Natural killer cell (primary cell): ENCODE measurements at regions of chr19 and their contacts with region 1.

Region 1: GRCh38 chr19:54189735-54190502 is 539 bp upstream of the MBOAT7 start:
- DNase-seq: peak; percentile 100
- ATAC-seq: peak; percentile 57 to 76 (median 61)
- H3K4me3 ChIP-seq: peak overlapping the region; percentile 92
- H3K4me3 Mint-ChIP-seq: peak overlapping the region; percentile 99
- H3K27ac ChIP-seq: peak overlapping the region; percentile 98
- H3K27ac Mint-ChIP-seq: peak overlapping the region; percentile 97 to 99
- H3K4me1 ChIP-seq: peaks cover 23% of the 10 kb centered on the region
- H3K4me1 Mint-ChIP-seq: peaks cover 26 to 36% of the 10 kb centered on the region in 2 donors
- H3K27me3 ChIP-seq: no peaks in the 10 kb centered on the region
- H3K27me3 Mint-ChIP-seq: no peaks in the 10 kb centered on the region
- CTCF ChIP-seq: no peak

Region 2: GRCh38 chr19:53867225-53868090 is 322.5 kb before region 1 on chr19 and contains the start of gene MYADM:
- intact Hi-C with region 1: loop called (anchors 2 kb)
- DNase-seq: peak; percentile 100
- ATAC-seq: peak; percentile 66 to 88 (median 66)
- H3K4me3 ChIP-seq: peak within 1 kb of the TSS; percentile 95
- H3K4me3 Mint-ChIP-seq: peak within 1 kb of the TSS; percentile 96
- H3K27ac ChIP-seq: peak within 1 kb of the TSS; percentile 99
- H3K27ac Mint-ChIP-seq: peak within 1 kb of the TSS; percentile 98 to 99
- H3K4me1 ChIP-seq: peaks cover 60% of the 10 kb centered on the region
- H3K4me1 Mint-ChIP-seq: peaks cover 38 to 53% of the 10 kb centered on the region in 2 donors
- H3K27me3 ChIP-seq: no peaks in the 10 kb centered on the region
- H3K27me3 Mint-ChIP-seq: no peaks in the 10 kb centered on the region
- CTCF ChIP-seq: no peak
- total RNA-seq, gene MYADM: 219 to 658 (median 296) TPM

Region 3: GRCh38 chr19:53912653-53913052 is 277.3 kb before region 1 on chr19:
- intact Hi-C with region 1: no loop called
- DNase-seq: no peak
- ATAC-seq: no peak
- H3K4me3 ChIP-seq: no peak overlapping the region
- H3K4me3 Mint-ChIP-seq: no peak overlapping the region
- H3K27ac ChIP-seq: no peak overlapping the region
- H3K27ac Mint-ChIP-seq: no peak overlapping the region
- H3K4me1 ChIP-seq: peaks cover 15% of the 10 kb centered on the region
- H3K4me1 Mint-ChIP-seq: peaks cover 8 to 18% of the 10 kb centered on the region in 2 donors
- H3K27me3 ChIP-seq: peaks cover 19% of the 10 kb centered on the region
- H3K27me3 Mint-ChIP-seq: peaks cover 45 to 63% of the 10 kb centered on the region in 2 donors
- CTCF ChIP-seq: no peak

Region 4: DNA sequence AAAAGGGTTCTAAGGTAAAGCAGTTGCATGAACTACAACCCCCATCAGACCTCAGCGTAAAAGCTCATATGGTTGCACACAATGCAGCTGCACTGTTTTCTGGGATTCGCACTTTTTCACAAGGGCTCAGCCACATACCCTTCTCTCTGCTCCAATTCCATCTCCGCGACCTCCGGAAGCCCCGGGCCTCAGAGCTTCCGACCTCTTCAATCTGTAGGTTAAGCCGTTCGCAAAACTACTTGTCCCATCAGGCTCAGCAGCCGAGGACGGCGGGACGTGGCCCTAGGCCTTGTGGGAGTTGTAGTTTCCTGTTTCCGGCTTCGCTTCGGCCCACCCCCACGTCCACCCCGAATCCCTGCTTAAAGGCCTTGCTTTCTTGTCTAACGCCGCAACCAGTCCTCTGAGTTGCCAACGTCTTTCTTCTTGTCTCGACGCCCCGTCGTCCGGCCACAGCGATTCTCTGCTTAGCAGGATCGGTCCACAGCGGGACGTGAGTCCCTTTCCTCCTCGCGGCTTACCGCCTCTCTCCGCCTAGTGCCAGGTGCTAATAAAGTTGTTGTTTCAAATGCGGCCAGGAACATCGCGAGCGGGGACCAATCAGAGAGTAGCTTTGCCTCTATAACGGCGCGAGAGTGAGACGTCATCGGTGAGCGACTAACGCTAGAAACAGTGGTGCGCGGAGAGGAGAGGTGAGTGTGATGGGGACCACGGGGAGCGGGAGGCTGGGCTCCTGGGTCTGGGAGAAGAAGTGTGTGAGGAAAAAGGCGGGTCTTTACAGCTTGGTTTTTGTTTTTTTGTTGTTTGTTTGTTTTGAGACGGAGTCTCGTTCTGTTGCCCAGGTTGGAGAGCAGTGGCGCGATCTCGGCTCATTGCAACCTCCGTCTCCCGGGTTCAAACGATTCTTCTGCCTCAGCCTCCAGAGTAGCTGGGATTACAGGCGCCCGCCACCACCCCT is 74.5 kb before region 1 on chr19 and contains the starts of genes PRPF31 and TFPT:
- intact Hi-C with region 1: loop called (anchors 1 kb)
- DNase-seq: peak; percentile 94 to 99
- ATAC-seq: peak; percentile 91 to 95 (median 93)
- H3K4me3 ChIP-seq: peak within 1 kb of the TSS; percentile 56
- H3K4me3 Mint-ChIP-seq: peak within 1 kb of the TSS; percentile 92
- H3K27ac ChIP-seq: peak within 1 kb of the TSS; percentile 67
- H3K27ac Mint-ChIP-seq: peak within 1 kb of the TSS; percentile 87 to 88
- H3K4me1 ChIP-seq: peaks cover 24% of the 10 kb centered on the region
- H3K4me1 Mint-ChIP-seq: peaks cover 27 to 44% of the 10 kb centered on the region in 2 donors
- H3K27me3 ChIP-seq: no peaks in the 10 kb centered on the region
- H3K27me3 Mint-ChIP-seq: no peaks in the 10 kb centered on the region
- CTCF ChIP-seq: no peak
- total RNA-seq, gene PRPF31: 64.4 to 65.9 (median 64.9) TPM
- total RNA-seq, gene TFPT: 14.1 to 14.4 (median 14.2) TPM

Region 5: GRCh38 chr19:54137086-54137921 is 52.6 kb before region 1 on chr19 and contains the start of gene CNOT3:
- intact Hi-C with region 1: loop called (anchors 1 kb)
- DNase-seq: peak; percentile 98 to 100
- ATAC-seq: peak; percentile 76 to 90 (median 79)
- H3K4me3 ChIP-seq: peak within 1 kb of the TSS; percentile 76
- H3K4me3 Mint-ChIP-seq: peak within 1 kb of the TSS; percentile 95
- H3K27ac ChIP-seq: peak within 1 kb of the TSS; percentile 94
- H3K27ac Mint-ChIP-seq: peak within 1 kb of the TSS; percentile 80 to 90
- H3K4me1 ChIP-seq: peaks cover 41% of the 10 kb centered on the region
- H3K4me1 Mint-ChIP-seq: peaks cover 50 to 58% of the 10 kb centered on the region in 2 donors
- H3K27me3 ChIP-seq: no peaks in the 10 kb centered on the region
- H3K27me3 Mint-ChIP-seq: no peaks in the 10 kb centered on the region
- CTCF ChIP-seq: no peak
- total RNA-seq, gene CNOT3: 46.3 to 73.9 (median 51.7) TPM

Region 6: DNA sequence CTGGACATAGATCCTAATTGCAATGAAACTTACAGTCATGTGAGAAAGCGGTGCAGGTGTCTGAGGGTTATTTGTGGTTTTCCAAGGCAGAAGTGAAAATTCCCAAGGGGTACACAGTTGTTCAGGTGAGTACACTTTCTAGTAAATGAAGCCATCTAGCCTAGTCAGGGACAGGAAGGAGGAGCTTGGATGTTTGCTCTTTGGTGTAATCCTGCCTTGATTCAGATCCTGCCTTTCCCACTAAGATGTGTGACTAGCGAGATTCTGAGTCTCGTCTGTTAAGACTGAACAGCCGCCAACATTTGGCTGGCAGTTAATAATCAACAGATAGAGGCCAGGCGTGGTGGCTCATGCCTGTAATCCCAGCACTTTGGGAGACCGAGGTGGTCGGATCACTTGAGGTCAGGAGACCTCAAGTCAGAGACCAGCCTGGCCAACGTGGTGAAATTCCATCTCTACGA is 13.3 kb after region 1 on chr19:
- intact Hi-C with region 1: loop called (anchors 1 kb)
- DNase-seq: no peak
- ATAC-seq: no peak
- H3K4me3 ChIP-seq: no peak overlapping the region
- H3K4me3 Mint-ChIP-seq: peak overlapping the region; percentile 42
- H3K27ac ChIP-seq: no peak overlapping the region
- H3K27ac Mint-ChIP-seq: peak overlapping the region in 1 of 2 donors; percentile 100
- H3K4me1 ChIP-seq: peaks cover 62% of the 10 kb centered on the region
- H3K4me1 Mint-ChIP-seq: peaks cover 43 to 53% of the 10 kb centered on the region in 2 donors
- H3K27me3 ChIP-seq: no peaks in the 10 kb centered on the region
- H3K27me3 Mint-ChIP-seq: no peaks in the 10 kb centered on the region
- CTCF ChIP-seq: no peak

Region 7: GRCh38 chr19:54209811-54210494 is 20.0 kb after region 1 on chr19:
- intact Hi-C with region 1: loop called (anchors 1 kb)
- DNase-seq: peak in 1 of 2 donors; percentile 65
- ATAC-seq: no peak
- H3K4me3 ChIP-seq: no peak overlapping the region
- H3K4me3 Mint-ChIP-seq: peak overlapping the region; percentile 86
- H3K27ac ChIP-seq: peak overlapping the region; percentile 77
- H3K27ac Mint-ChIP-seq: peak overlapping the region; percentile 90 to 94
- H3K4me1 ChIP-seq: peaks cover 64% of the 10 kb centered on the region
- H3K4me1 Mint-ChIP-seq: peaks cover 36 to 43% of the 10 kb centered on the region in 2 donors
- H3K27me3 ChIP-seq: no peaks in the 10 kb centered on the region
- H3K27me3 Mint-ChIP-seq: no peaks in the 10 kb centered on the region
- CTCF ChIP-seq: no peak

Region 8: GRCh38 chr19:55653758-55654539 is 1464.0 kb after region 1 on chr19:
- intact Hi-C with region 1: loop called (anchors 10 kb)
- DNase-seq: peak; percentile 99 to 100
- ATAC-seq: peak; percentile 75 to 87 (median 75)
- H3K4me3 ChIP-seq: peak overlapping the region; percentile 65
- H3K4me3 Mint-ChIP-seq: peak overlapping the region; percentile 100
- H3K27ac ChIP-seq: peak overlapping the region; percentile 100
- H3K27ac Mint-ChIP-seq: peak overlapping the region; percentile 99 to 100
- H3K4me1 ChIP-seq: peaks cover 50% of the 10 kb centered on the region
- H3K4me1 Mint-ChIP-seq: peaks cover 40 to 53% of the 10 kb centered on the region in 2 donors
- H3K27me3 ChIP-seq: no peaks in the 10 kb centered on the region
- H3K27me3 Mint-ChIP-seq: peaks cover 0 to 7% of the 10 kb centered on the region in 2 donors
- CTCF ChIP-seq: peak; percentile 99